Right ventricle myocardium inferior (tissue), 1 donor: ENCODE measurements at regions of chr1 and their contacts with region 1.

Region 1: DNA sequence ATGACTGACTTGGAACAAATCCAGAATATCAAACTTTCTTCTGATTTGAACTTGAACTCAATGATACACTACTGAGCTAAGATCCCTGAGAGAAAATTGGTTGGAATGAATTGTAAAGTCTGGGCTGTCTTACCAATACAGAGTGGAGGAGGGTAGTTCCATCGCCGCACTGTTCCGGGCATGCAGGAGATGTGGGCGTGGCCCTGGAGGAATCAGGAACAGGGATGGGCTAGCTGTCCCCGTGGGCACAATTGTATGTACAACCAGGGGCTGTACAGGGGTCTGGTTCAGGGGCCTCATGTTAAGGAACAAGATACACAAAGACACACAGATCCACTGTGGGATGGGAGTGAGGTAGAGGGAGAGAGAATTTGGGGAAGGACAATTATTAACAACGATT is 144.3 kb downstream of the ZSCAN20 start:
- DNase-seq: no peak
- ATAC-seq: no peak

Region 2: GRCh38 chr1:33228935-33229487 is 387.8 kb before region 1 on chr1:
- intact Hi-C with region 1: loop called (anchors 10 kb)
- DNase-seq: no peak
- ATAC-seq: peak; percentile 87

Region 3: DNA sequence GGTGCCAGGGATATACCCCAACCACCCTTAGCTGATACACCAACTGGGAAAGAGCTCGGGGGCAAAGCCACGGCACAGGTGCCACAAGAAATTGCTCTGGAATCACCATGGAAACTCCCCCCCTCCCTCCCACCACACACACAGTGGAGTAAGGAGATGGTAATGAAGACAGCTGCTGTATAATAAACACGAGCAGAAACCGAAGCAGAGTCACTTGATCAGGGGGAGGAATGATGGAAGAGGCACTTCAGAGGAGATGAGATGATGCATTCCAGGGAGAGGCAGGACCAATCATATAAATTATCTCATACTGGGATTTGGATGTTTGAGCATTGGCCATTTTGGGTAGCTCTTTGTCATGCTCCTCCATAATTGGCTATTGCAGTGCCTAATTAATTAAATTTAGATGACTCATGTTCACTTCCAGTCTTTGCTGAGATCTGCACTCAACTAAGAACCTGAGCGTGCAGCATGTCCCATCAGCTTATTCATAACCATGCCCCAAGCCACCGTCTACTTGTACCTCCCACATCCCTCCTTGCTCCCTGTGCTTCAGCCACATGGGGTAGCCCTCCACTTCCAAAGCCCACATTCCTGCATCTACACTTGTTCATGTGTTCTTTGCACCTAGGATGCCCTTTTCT is 45.2 kb after region 1 on chr1:
- intact Hi-C with region 1: no loop called
- DNase-seq: no peak
- ATAC-seq: no peak